ENCODE measurements at regions of chr2 and their contacts with region 1.

Region 1: GRCh38 chr2:12716282-12717190 is at the start of gene TRIB2:
- DNase-seq: peak; percentile 89 to 93 (median 91)
- H3K4me3 ChIP-seq: peak within 1 kb of the TSS; percentile 78
- H3K27ac ChIP-seq: peak within 1 kb of the TSS; percentile 87 to 89
- H3K4me1 ChIP-seq: peaks cover 3% of the 10 kb centered on the region
- H3K27me3 ChIP-seq: no peaks in the 10 kb centered on the region
- CTCF ChIP-seq: no peak
- EP300 ChIP-seq: no peak
- POLR2A ChIP-seq: peak; percentile 56
- total RNA-seq, gene TRIB2: 68.1 to 209 (median 103) TPM

Region 2: GRCh38 chr2:11863513-11864328 is 852.8 kb before region 1 on chr2:
- intact Hi-C with region 1: loop called in 2 of 4 experiments (anchors 2 to 10 kb)
- DNase-seq: peak; percentile 81 to 90 (median 88)
- H3K4me3 ChIP-seq: no peak overlapping the region
- H3K27ac ChIP-seq: peak overlapping the region in 1 of 2 donors; percentile 47
- H3K4me1 ChIP-seq: no peaks in the 10 kb centered on the region
- H3K27me3 ChIP-seq: no peaks in the 10 kb centered on the region
- CTCF ChIP-seq: peak; percentile 87 to 92 (median 90)
- EP300 ChIP-seq: no peak
- POLR2A ChIP-seq: peak; percentile 22

Region 3: GRCh38 chr2:12320991-12321641 is 395.4 kb before region 1 on chr2:
- intact Hi-C with region 1: loop called in 1 of 4 experiments (anchors 5 kb)
- DNase-seq: peak; percentile 67 to 83 (median 77)
- H3K4me3 ChIP-seq: no peak overlapping the region
- H3K27ac ChIP-seq: peak overlapping the region in 1 of 2 donors; percentile 55
- H3K4me1 ChIP-seq: peaks cover 12% of the 10 kb centered on the region
- H3K27me3 ChIP-seq: no peaks in the 10 kb centered on the region
- CTCF ChIP-seq: peak in 1 of 3 donors; percentile 13
- EP300 ChIP-seq: no peak
- POLR2A ChIP-seq: no peak

Region 4: GRCh38 chr2:12429779-12430406 is 286.6 kb before region 1 on chr2:
- intact Hi-C with region 1: loop called in 2 of 4 experiments (anchors 10 kb)
- DNase-seq: no peak
- H3K4me3 ChIP-seq: no peak overlapping the region
- H3K27ac ChIP-seq: peak overlapping the region in 1 of 2 donors; percentile 74
- H3K4me1 ChIP-seq: peaks cover 15% of the 10 kb centered on the region
- H3K27me3 ChIP-seq: no peaks in the 10 kb centered on the region
- CTCF ChIP-seq: no peak
- EP300 ChIP-seq: no peak
- POLR2A ChIP-seq: no peak

Region 5: DNA sequence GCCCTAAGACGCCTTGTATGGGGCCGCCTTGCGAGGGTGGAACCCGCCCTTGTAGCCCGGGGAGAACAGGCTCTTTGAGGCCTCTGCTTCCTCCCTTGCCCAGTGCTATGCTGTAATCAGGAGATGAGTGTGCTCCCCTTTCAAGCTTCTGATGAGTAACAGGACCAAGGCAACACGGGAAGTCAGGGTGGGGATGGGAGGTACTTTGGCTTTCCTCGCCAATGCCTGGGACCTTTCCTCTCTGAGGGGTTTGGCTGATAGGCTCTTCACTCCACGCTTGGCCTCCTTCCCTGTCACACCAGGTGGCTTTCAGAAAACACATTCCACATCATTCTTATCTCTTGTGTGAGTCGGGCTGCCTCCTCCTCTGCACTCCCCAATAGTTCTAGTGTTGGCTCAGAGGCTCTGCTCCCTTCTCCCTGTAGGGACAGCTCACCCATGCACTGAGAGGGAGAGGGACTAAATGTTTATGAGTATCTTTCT is 223.5 kb before region 1 on chr2:
- intact Hi-C with region 1: loop called in 1 of 4 experiments (anchors 10 kb)
- DNase-seq: peak; percentile 87 to 96 (median 91)
- H3K4me3 ChIP-seq: no peak overlapping the region
- H3K27ac ChIP-seq: peak overlapping the region in 1 of 2 donors; percentile 70
- H3K4me1 ChIP-seq: peaks cover 2% of the 10 kb centered on the region
- H3K27me3 ChIP-seq: no peaks in the 10 kb centered on the region
- CTCF ChIP-seq: peak in 1 of 3 donors; percentile 31
- EP300 ChIP-seq: no peak
- POLR2A ChIP-seq: peak; percentile 56

Region 6: GRCh38 chr2:13006829-13007717 is 290.5 kb after region 1 on chr2:
- intact Hi-C with region 1: loop called in 2 of 4 experiments (anchors 5 kb)
- DNase-seq: peak; percentile 58 to 76 (median 67)
- H3K4me3 ChIP-seq: peak overlapping the region; percentile 28
- H3K27ac ChIP-seq: peak overlapping the region in 1 of 2 donors; percentile 62
- H3K4me1 ChIP-seq: no peaks in the 10 kb centered on the region
- H3K27me3 ChIP-seq: no peaks in the 10 kb centered on the region
- CTCF ChIP-seq: peak; percentile 84 to 86 (median 86)
- EP300 ChIP-seq: no peak
- POLR2A ChIP-seq: no peak

Measured in ovary (tissue), 10 donors.